Activated CD4-positive, alpha-beta T cell treated with anti-CD3 and anti-CD28 coated beads, Interleukin-2, amount 10 ng/mL, durations not matched to agents 24 days and 14 days (primary cell): ENCODE measurements at regions of chr20 and their contacts with region 1.

Region 1: DNA sequence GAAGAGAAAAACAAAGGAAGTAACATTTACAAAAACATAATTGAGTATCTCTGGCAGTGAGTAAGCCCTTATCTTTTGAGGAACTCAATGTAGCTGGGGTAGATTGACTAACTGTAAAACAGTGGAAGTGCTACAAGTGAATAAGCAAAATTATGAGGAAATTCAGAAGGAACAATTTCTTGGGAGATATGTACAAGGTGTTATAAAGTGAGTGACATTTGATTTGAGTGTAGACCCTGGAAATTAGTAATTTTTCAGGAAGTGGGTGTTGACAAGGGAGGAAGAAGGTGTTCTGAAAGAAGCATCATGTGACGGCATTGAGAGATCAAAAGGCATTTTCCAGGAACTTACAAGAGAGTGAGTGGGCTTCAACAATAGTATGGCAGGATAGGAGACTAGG is 22.2 kb downstream of the XRN2 start:
- DNase-seq: no peak
- H3K4me3 Mint-ChIP-seq: peak overlapping the region; percentile 63
- H3K27ac Mint-ChIP-seq: peak overlapping the region; percentile 53
- H3K4me1 Mint-ChIP-seq: peaks cover 47% of the 10 kb centered on the region
- H3K27me3 Mint-ChIP-seq: no peaks in the 10 kb centered on the region

Region 2: GRCh38 chr20:21251278-21251677 is 74.0 kb before region 1 on chr20:
- intact Hi-C with region 1: no loop called
- DNase-seq: no peak
- H3K4me3 Mint-ChIP-seq: no peak overlapping the region
- H3K27ac Mint-ChIP-seq: peak overlapping the region; percentile 58
- H3K4me1 Mint-ChIP-seq: peaks cover 10% of the 10 kb centered on the region
- H3K27me3 Mint-ChIP-seq: no peaks in the 10 kb centered on the region

Region 3: DNA sequence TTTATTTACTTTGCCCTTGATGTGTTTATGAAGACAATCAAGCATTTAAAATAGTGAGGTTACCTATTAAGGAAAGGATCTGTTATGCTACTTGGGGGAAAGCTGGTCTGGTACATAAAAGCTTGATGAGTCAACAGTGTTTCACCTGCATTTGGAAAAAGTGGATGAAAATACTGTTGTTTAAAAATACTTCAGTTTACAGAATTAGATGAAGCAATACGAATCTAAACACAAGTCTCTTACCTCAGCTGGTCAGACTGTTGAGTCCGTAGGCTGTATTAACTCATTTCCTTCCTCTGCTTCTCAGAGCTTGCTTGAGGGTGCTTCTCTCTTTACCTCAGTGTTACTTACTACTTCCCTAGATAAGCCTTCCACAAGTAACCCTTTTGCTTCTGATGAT is 36.0 kb after region 1 on chr20:
- intact Hi-C with region 1: loop called (anchors 5 kb)
- DNase-seq: no peak
- H3K4me3 Mint-ChIP-seq: no peak overlapping the region
- H3K27ac Mint-ChIP-seq: peak overlapping the region; percentile 68
- H3K4me1 Mint-ChIP-seq: peaks cover 20% of the 10 kb centered on the region
- H3K27me3 Mint-ChIP-seq: no peaks in the 10 kb centered on the region